Activated CD8-positive, alpha-beta T cell treated with anti-CD3 and anti-CD28 coated beads for 36 hours (primary cell): ENCODE measurements at regions of chr1 and their contacts with region 1.

Region 1: DNA sequence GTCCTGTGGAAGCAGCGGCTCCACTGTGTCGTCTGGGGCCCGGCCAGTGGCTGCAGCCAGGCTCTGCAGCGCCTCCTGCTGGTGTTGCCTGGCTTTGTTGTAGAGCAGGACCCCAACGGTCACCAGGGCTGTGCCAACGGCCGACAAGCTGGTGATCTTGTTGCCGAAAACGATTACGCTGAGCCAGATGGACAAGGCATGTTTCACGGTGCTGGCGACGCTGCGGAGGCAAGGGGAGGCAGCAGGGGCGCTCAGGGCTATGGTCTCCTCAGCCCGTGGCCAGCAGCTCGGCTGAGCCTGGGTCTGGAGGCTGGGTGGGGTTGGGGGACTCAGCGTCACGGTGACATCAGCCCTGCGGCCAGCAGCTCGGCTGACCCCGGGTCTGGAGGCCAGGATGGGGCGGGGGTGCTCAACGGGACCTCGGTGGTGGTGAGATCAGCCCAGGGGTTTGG is 7.0 kb upstream of the CDK11B start:
- DNase-seq: peak; percentile 47
- ATAC-seq: no peak
- H3K4me3 Mint-ChIP-seq: no peak overlapping the region
- H3K27ac Mint-ChIP-seq: no peak overlapping the region
- H3K4me1 Mint-ChIP-seq: peaks cover 2% of the 10 kb centered on the region
- H3K27me3 Mint-ChIP-seq: no peaks in the 10 kb centered on the region
- CTCF ChIP-seq: peak; percentile 68

Region 2: GRCh38 chr1:1678581-1679390 is 13.0 kb after region 1 on chr1:
- CTCF ChIA-PET with region 1: interaction called, 22 read pairs
- POLR2A ChIA-PET with region 1: interaction called, 3 read pairs
- intact Hi-C with region 1: no loop called
- DNase-seq: peak; percentile 89
- ATAC-seq: peak; percentile 87
- H3K4me3 Mint-ChIP-seq: peak overlapping the region; percentile 82
- H3K27ac Mint-ChIP-seq: peak overlapping the region; percentile 97
- H3K4me1 Mint-ChIP-seq: peaks cover 24% of the 10 kb centered on the region
- H3K27me3 Mint-ChIP-seq: no peaks in the 10 kb centered on the region
- CTCF ChIP-seq: peak; percentile 82

Region 3: DNA sequence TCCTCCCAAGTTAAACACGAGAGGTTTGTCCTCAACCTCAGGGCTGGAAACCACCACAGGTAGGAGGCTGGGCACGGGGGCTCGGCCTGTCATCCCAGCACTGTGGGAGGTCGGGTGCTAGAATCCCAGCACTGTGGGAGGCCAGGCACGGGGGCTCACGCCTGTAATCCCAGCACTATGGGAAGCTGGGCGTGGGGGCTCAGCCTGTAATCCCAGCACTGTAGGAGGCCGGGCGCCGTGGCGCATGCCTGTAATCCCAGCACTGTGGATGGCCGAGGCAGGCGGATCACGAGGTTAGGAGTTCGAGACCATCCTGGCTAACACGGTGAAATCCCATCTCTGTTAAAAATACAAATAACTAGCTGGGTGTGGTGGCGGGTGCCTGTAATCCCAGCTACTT is 65.0 kb after region 1 on chr1:
- CTCF ChIA-PET with region 1: interaction called, 11 read pairs
- POLR2A ChIA-PET with region 1: no interaction called
- intact Hi-C with region 1: no loop called
- DNase-seq: no peak
- ATAC-seq: no peak
- H3K4me3 Mint-ChIP-seq: no peak overlapping the region
- H3K27ac Mint-ChIP-seq: no peak overlapping the region
- H3K4me1 Mint-ChIP-seq: peaks cover 10% of the 10 kb centered on the region
- H3K27me3 Mint-ChIP-seq: no peaks in the 10 kb centered on the region
- CTCF ChIP-seq: no peak

Region 4: GRCh38 chr1:1775327-1776226 is 109.8 kb after region 1 on chr1:
- CTCF ChIA-PET with region 1: no interaction called
- POLR2A ChIA-PET with region 1: no interaction called
- intact Hi-C with region 1: no loop called
- DNase-seq: no peak
- ATAC-seq: no peak
- H3K4me3 Mint-ChIP-seq: peak overlapping the region; percentile 36
- H3K27ac Mint-ChIP-seq: peak overlapping the region; percentile 32
- H3K4me1 Mint-ChIP-seq: peaks cover 45% of the 10 kb centered on the region
- H3K27me3 Mint-ChIP-seq: no peaks in the 10 kb centered on the region
- CTCF ChIP-seq: no peak